Aorta (tissue), 5 donors: ENCODE measurements at regions of chr4 and their contacts with region 1.

Region 1: DNA sequence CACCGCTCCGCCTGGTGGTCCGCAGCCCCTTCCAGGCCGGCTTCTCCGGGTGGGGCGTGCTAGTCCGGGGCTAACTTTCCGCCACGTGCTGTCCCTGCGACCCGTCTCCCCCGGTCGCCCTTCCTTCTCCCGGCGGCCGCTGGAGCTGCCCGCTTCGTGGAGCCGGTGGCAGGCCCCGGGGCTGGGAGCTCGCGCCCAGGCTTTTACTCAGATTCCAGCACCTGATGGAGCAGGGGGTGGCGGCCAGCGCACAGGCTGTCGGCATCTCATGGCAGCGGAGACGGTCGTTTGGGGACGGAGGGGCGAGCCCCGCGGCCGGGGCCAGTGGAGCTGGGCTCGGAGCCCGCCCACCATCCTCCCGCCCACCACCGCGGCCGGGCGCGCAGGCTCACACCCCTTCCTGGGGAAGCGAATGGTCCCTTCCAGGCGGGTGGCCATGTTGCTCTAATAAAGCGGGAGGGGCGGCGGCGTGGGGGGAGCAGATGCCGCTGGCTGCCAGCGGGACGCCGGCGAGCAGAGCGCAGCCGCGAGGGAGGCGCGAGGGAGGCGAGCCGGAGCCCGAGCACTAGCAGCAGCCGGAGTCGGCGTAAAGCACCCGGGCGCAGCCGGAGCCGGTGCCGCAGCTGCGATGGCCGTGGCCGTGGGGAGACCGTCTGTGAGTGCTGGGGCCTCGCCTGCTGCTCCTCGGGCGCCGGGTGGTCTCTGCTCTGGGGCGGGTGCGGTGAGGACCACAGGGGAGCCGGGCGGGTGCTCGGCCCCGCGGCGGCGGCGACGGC is at the start of gene SEPTIN11:
- DNase-seq: peak; percentile 96 to 98
- ATAC-seq: peak; percentile 94
- H3K4me3 ChIP-seq: peak within 1 kb of the TSS; percentile 84 to 92
- H3K27ac ChIP-seq: peak within 1 kb of the TSS; percentile 23 to 88
- H3K4me1 ChIP-seq: peaks cover 2% of the 10 kb centered on the region in 2 donors
- H3K27me3 ChIP-seq: no peaks in the 10 kb centered on the region
- total RNA-seq, gene SEPTIN11: 86.1 to 120 TPM

Region 2: DNA sequence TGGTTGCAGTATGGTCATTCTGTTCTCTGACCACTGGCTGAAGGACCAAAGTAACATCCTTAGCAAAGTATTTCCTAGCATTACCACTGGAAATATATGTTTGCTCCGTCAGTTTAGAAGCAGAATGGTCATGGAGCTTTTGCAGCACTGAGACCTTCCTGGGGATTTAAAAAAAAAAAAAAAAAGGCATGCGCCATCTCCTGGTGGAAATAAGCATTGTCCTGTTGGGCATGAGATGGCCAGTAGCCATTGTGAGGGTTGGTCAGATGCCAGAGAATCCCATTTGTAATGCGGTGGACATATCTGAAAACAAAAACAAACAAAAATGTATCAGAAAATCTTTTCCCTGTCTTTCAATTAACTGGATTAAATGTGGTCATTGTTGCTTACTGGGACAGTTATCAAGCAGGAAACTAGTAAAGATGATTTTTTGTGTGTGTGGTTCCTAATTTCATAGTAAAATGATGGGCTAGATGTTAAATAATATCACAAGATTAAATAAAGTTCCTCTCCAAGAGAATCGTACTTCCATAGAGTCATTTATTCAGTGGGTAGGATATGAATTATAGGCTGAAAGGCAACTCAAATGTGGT is 191.1 kb before region 1 on chr4:
- intact Hi-C with region 1: loop called in 1 of 2 experiments (anchors 5 kb)
- DNase-seq: no peak
- ATAC-seq: peak; percentile 74
- H3K4me3 ChIP-seq: no peak overlapping the region
- H3K27ac ChIP-seq: peak overlapping the region in 1 of 2 donors; percentile 70
- H3K4me1 ChIP-seq: peaks cover 0 to 4% of the 10 kb centered on the region in 2 donors
- H3K27me3 ChIP-seq: no peaks in the 10 kb centered on the region

Region 3: GRCh38 chr4:76830964-76831703 is 118.3 kb before region 1 on chr4:
- intact Hi-C with region 1: loop called in 1 of 2 experiments (anchors 10 kb)
- DNase-seq: no peak
- ATAC-seq: peak; percentile 84
- H3K4me3 ChIP-seq: no peak overlapping the region
- H3K27ac ChIP-seq: peak overlapping the region; percentile 67 to 68
- H3K4me1 ChIP-seq: peaks cover 0 to 8% of the 10 kb centered on the region in 2 donors
- H3K27me3 ChIP-seq: no peaks in the 10 kb centered on the region

Region 4: GRCh38 chr4:76984788-76985211 is 35.3 kb after region 1 on chr4:
- intact Hi-C with region 1: loop called in 1 of 2 experiments (anchors 5 kb)
- DNase-seq: peak; percentile 68 to 77
- ATAC-seq: peak; percentile 96
- H3K4me3 ChIP-seq: no peak overlapping the region
- H3K27ac ChIP-seq: peak overlapping the region in 1 of 2 donors; percentile 26
- H3K4me1 ChIP-seq: peaks cover 8 to 15% of the 10 kb centered on the region in 2 donors
- H3K27me3 ChIP-seq: no peaks in the 10 kb centered on the region

Region 5: GRCh38 chr4:77001907-77002306 is 52.4 kb after region 1 on chr4:
- intact Hi-C with region 1: loop called in 1 of 2 experiments (anchors 5 kb)
- DNase-seq: no peak
- ATAC-seq: peak; percentile 63
- H3K4me3 ChIP-seq: no peak overlapping the region
- H3K27ac ChIP-seq: peak overlapping the region in 1 of 2 donors; percentile 22
- H3K4me1 ChIP-seq: peaks cover 0 to 6% of the 10 kb centered on the region in 2 donors
- H3K27me3 ChIP-seq: no peaks in the 10 kb centered on the region

Region 6: DNA sequence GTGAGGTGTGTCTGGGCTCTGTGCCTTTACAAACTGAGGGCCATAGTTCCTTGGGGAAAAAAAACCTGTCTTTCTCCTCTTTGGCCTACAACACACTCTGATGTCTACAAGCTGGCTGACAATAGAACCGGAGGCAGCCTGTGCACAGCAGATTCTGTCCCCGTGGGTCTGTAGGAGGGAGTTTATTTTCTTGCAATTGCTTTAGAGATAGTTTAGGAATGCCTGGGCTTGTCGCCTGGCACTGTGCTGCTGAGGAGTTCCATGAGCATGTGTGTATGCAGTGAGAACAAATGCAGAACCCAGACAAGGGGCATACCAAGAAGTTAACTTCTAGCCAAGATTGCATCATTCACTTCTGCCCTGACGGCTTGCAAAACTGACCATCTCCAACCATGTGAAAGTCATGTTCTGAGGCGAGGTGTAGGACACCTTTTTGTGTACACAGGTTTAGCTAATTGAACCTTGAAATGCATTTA is 72.2 kb after region 1 on chr4:
- intact Hi-C with region 1: no loop called
- DNase-seq: peak in 1 of 2 donors; percentile 58
- ATAC-seq: peak; percentile 50
- H3K4me3 ChIP-seq: no peak overlapping the region
- H3K27ac ChIP-seq: peak overlapping the region in 1 of 2 donors; percentile 47
- H3K4me1 ChIP-seq: peaks cover 0 to 6% of the 10 kb centered on the region in 2 donors
- H3K27me3 ChIP-seq: no peaks in the 10 kb centered on the region

Region 7: GRCh38 chr4:77044461-77045150 is 95.1 kb after region 1 on chr4:
- intact Hi-C with region 1: loop called in 1 of 2 experiments (anchors 5 kb)
- DNase-seq: no peak
- ATAC-seq: peak; percentile 55
- H3K4me3 ChIP-seq: no peak overlapping the region
- H3K27ac ChIP-seq: peak overlapping the region in 1 of 2 donors; percentile 28
- H3K4me1 ChIP-seq: peaks cover 0 to 4% of the 10 kb centered on the region in 2 donors
- H3K27me3 ChIP-seq: no peaks in the 10 kb centered on the region